Dorsolateral prefrontal cortex (tissue), 120 donors: ENCODE measurements at regions of chr1 and their contacts with region 1.

Region 1: DNA sequence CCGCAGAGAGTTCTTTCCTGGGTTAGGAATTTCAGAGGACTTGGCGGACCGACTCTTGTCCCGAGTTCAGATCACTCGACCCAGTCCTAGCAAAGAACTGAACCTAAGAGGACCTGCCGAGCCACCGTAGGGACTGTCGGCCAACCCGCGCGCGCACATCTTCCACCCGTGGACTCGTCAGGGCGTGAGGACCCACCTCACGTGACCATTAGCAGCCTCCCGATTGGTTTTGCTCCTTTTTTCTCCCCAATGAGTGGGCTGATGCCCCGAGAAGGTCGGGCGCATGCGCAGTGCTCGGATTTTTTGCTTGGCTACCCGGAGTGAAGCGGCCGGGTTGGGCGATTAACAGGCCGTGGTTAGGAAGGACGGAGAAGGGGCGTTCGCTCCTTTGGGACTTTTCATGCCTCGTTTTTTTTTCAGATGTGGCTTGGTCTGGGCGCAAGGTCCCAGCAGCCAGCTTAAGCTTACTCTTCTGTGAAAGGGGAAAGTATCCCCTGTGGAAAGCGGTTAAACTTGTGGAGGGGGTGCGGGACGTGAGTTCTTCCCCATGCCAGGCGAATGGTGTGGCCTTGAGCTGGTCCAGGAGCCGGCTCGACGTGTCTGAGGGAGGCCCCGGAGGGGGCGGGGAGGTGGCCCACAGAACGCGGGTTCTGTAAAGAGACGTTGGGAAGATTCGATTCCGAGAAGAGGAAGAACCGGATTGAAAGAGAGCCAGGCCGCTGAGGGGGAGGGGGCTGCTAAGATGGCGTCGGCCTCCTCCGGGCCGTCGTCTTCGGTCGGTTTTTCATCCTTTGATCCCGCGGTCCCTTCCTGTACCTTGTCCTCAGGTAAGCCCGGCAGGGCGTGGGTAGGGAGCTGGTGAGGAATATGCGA is at the start of gene PIP5K1A:
- DNase-seq: peak; percentile 96 to 99 (median 98)
- H3K4me3 ChIP-seq: peak within 1 kb of the TSS; percentile 62 to 98 (median 91)
- H3K27ac ChIP-seq: peak within 1 kb of the TSS; percentile 18 to 95 (median 86)
- H3K27me3 ChIP-seq: no peaks in the 10 kb centered on the region
- CTCF ChIP-seq: peak in 31 of 56 donors; percentile 9 to 60 (median 33)
- total RNA-seq, gene PIP5K1A: 43.8 to 76.6 (median 61.3) TPM

Region 2: GRCh38 chr1:151254217-151255213 is 56.0 kb after region 1 on chr1 and contains the start of gene PSMD4:
- intact Hi-C with region 1: loop called (anchors 1 to 2 kb)
- DNase-seq: peak; percentile 83 to 96 (median 94)
- H3K4me3 ChIP-seq: peak within 1 kb of the TSS; percentile 70 to 100 (median 97)
- H3K27ac ChIP-seq: peak within 1 kb of the TSS in 58 of 59 donors; percentile 28 to 96 (median 86)
- H3K27me3 ChIP-seq: no peaks in the 10 kb centered on the region
- CTCF ChIP-seq: peak in 32 of 56 donors; percentile 4 to 49 (median 28)
- total RNA-seq, gene PSMD4: 129 to 230 (median 181) TPM

Region 3: GRCh38 chr1:151281969-151282882 is 83.7 kb after region 1 on chr1 and contains the start of gene ZNF687:
- intact Hi-C with region 1: no loop called
- DNase-seq: peak; percentile 100
- H3K4me3 ChIP-seq: peak within 1 kb of the TSS; percentile 64 to 100 (median 88)
- H3K27ac ChIP-seq: peak within 1 kb of the TSS; percentile 91 to 100 (median 97)
- H3K27me3 ChIP-seq: no peaks in the 10 kb centered on the region
- CTCF ChIP-seq: peak in 13 of 56 donors; percentile 3 to 29 (median 11)
- total RNA-seq, gene ZNF687: 16.1 to 36.4 (median 25.3) TPM

Region 4: GRCh38 chr1:151340870-151341754 is 142.6 kb after region 1 on chr1:
- intact Hi-C with region 1: loop called (anchors 2 to 5 kb)
- DNase-seq: peak in 5 of 10 donors; percentile 32 to 57 (median 49)
- H3K4me3 ChIP-seq: peak overlapping the region in 8 of 59 donors; percentile 3 to 38 (median 12)
- H3K27ac ChIP-seq: peak overlapping the region in 46 of 59 donors; percentile 1 to 82 (median 56)
- H3K27me3 ChIP-seq: no peaks in the 10 kb centered on the region
- CTCF ChIP-seq: peak; percentile 59 to 96 (median 84)

Region 5: GRCh38 chr1:151346769-151347522 is 148.5 kb after region 1 on chr1 and contains the start of gene RFX5:
- intact Hi-C with region 1: loop called in 1 of 2 experiments (anchors 5 kb)
- DNase-seq: peak; percentile 79 to 97 (median 95)
- H3K4me3 ChIP-seq: peak within 1 kb of the TSS; percentile 55 to 95 (median 76)
- H3K27ac ChIP-seq: peak within 1 kb of the TSS in 58 of 59 donors; percentile 27 to 96 (median 83)
- H3K27me3 ChIP-seq: no peaks in the 10 kb centered on the region
- CTCF ChIP-seq: peak in 27 of 56 donors; percentile 6 to 51 (median 28)
- total RNA-seq, gene RFX5: 21.1 to 65.9 (median 38.7) TPM

Region 6: DNA sequence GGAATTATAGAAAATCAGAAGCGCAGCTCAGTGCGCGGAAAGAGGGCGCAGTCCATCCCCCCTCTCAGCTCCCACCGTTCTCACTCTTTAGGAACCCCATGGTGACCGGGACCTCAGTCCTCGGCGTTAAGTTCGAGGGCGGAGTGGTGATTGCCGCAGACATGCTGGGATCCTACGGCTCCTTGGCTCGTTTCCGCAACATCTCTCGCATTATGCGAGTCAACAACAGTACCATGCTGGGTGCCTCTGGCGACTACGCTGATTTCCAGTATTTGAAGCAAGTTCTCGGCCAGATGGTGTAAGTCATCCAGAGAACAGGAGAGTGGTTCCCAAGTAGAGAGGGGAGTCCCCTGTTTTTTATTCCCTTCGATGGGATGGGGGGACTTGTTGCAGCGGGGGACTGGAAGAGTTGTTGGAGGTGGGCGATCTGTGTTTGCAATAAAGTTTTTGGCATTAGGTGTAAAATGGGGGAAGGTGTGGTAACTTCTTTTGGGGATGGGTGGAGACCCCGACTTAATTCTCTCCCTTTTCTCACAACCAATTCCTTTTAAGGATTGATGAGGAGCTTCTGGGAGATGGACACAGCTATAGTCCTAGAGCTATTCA is 201.5 kb after region 1 on chr1:
- intact Hi-C with region 1: loop called (anchors 5 to 10 kb)
- DNase-seq: peak in 1 of 10 donors; percentile 25
- H3K4me3 ChIP-seq: peak overlapping the region; percentile 58 to 100 (median 95)
- H3K27ac ChIP-seq: peak overlapping the region; percentile 63 to 97 (median 90)
- H3K27me3 ChIP-seq: no peaks in the 10 kb centered on the region
- CTCF ChIP-seq: no peak